Transverse colon (tissue), 4 donors: ENCODE measurements at regions of chr12 and their contacts with region 1.

Region 1: GRCh38 chr12:10771132-10771733 is 31.2 kb downstream of the TAS2R7 start:
- DNase-seq: no peak
- H3K4me3 ChIP-seq: no peak overlapping the region
- H3K27ac ChIP-seq: no peak overlapping the region
- H3K4me1 ChIP-seq: no peaks in the 10 kb centered on the region
- H3K27me3 ChIP-seq: peaks cover 65% of the 10 kb centered on the region
- CTCF ChIP-seq: peak; percentile 54 to 75 (median 56)
- EP300 ChIP-seq: no peak
- POLR2A ChIP-seq: no peak

Region 2: DNA sequence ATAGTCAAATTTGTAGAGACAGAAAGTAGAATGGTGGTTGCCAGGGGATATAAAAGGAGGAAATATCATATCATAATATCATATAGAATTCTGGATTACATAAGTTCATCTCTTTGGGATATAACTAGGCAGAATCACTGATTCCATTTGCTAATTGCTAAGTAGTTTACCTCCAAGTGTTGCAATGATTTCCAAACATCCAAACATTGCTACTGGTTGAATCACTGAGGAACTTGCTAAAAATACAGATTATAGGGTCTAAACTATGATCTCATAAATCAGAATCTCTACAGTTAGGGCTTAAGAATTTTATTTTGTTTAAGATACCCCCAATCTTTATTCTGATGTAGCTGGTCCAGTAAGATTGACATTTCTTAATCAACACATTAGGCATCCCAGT is 431.6 kb after region 1 on chr12:
- in situ Hi-C with region 1: loop called (anchors 5 to 25 kb)
- intact Hi-C with region 1: loop called (anchors 10 kb)
- DNase-seq: no peak
- H3K4me3 ChIP-seq: no peak overlapping the region
- H3K27ac ChIP-seq: no peak overlapping the region
- H3K4me1 ChIP-seq: no peaks in the 10 kb centered on the region
- H3K27me3 ChIP-seq: no peaks in the 10 kb centered on the region
- CTCF ChIP-seq: no peak
- EP300 ChIP-seq: no peak
- POLR2A ChIP-seq: no peak

Region 3: GRCh38 chr12:11209108-11209507 is 437.9 kb after region 1 on chr12:
- in situ Hi-C with region 1: loop called in 2 of 4 experiments (anchors 10 to 25 kb)
- intact Hi-C with region 1: no loop called
- DNase-seq: no peak
- H3K4me3 ChIP-seq: no peak overlapping the region
- H3K27ac ChIP-seq: no peak overlapping the region
- H3K4me1 ChIP-seq: no peaks in the 10 kb centered on the region
- H3K27me3 ChIP-seq: no peaks in the 10 kb centered on the region
- CTCF ChIP-seq: no peak
- EP300 ChIP-seq: no peak
- POLR2A ChIP-seq: no peak

Region 4: GRCh38 chr12:11497995-11498394 is 726.8 kb after region 1 on chr12:
- in situ Hi-C with region 1: loop called in 1 of 4 experiments (anchors 10 kb)
- intact Hi-C with region 1: no loop called
- DNase-seq: no peak
- H3K4me3 ChIP-seq: no peak overlapping the region
- H3K27ac ChIP-seq: no peak overlapping the region
- H3K4me1 ChIP-seq: peaks cover 0 to 3% (median 2%) of the 10 kb centered on the region in 4 donors
- H3K27me3 ChIP-seq: peaks cover 25% of the 10 kb centered on the region
- CTCF ChIP-seq: no peak
- EP300 ChIP-seq: no peak
- POLR2A ChIP-seq: no peak